ENCODE measurements at regions of chr21 and their contacts with region 1.

Region 1: GRCh38 chr21:37366482-37367316 is at the start of gene DYRK1A:
- DNase-seq: peak; percentile 99
- H3K4me3 ChIP-seq: peak within 1 kb of the TSS; percentile 89 to 94 (median 93)
- H3K27ac ChIP-seq: peak within 1 kb of the TSS; percentile 95
- H3K4me1 ChIP-seq: peaks cover 39% of the 10 kb centered on the region
- H3K27me3 ChIP-seq: no peaks in the 10 kb centered on the region
- CTCF ChIP-seq: peak in 1 of 2 donors; percentile 10
- POLR2A ChIP-seq: no peak
- total RNA-seq, gene DYRK1A: 51.8 TPM in 2 replicates

Region 2: GRCh38 chr21:37072988-37073416 is 293.7 kb before region 1 on chr21 and contains the starts of genes PIGP and TTC3:
- CTCF ChIA-PET with region 1: no interaction called
- POLR2A ChIA-PET with region 1: no interaction called
- dilution Hi-C with region 1: no loop called
- intact Hi-C with region 1: loop called (anchors 1 kb)
- DNase-seq: peak; percentile 97
- H3K4me3 ChIP-seq: peak within 1 kb of the TSS; percentile 49 to 88 (median 60)
- H3K27ac ChIP-seq: peak within 1 kb of the TSS; percentile 95
- H3K4me1 ChIP-seq: peaks cover 17% of the 10 kb centered on the region
- H3K27me3 ChIP-seq: no peaks in the 10 kb centered on the region
- CTCF ChIP-seq: no peak
- POLR2A ChIP-seq: peak; percentile 73
- total RNA-seq, gene PIGP: 11.4 and 12.5 TPM in 2 replicates
- total RNA-seq, gene TTC3: 104 and 113 TPM in 2 replicates

Region 3: GRCh38 chr21:37193006-37193405 is 173.7 kb before region 1 on chr21:
- CTCF ChIA-PET with region 1: no interaction called
- POLR2A ChIA-PET with region 1: no interaction called
- dilution Hi-C with region 1: no loop called
- intact Hi-C with region 1: no loop called
- DNase-seq: no peak
- H3K4me3 ChIP-seq: no peak overlapping the region
- H3K27ac ChIP-seq: no peak overlapping the region
- H3K4me1 ChIP-seq: no peaks in the 10 kb centered on the region
- H3K27me3 ChIP-seq: no peaks in the 10 kb centered on the region
- CTCF ChIP-seq: no peak
- POLR2A ChIP-seq: no peak

Region 4: GRCh38 chr21:37267269-37268184 is 99.2 kb before region 1 on chr21 and contains the start of gene VPS26C:
- CTCF ChIA-PET with region 1: interaction called, 3 read pairs
- POLR2A ChIA-PET with region 1: interaction called, 13 read pairs
- dilution Hi-C with region 1: no loop called
- intact Hi-C with region 1: loop called (anchors 1 kb)
- DNase-seq: peak; percentile 100
- H3K4me3 ChIP-seq: peak within 1 kb of the TSS; percentile 35 to 73 (median 72)
- H3K27ac ChIP-seq: peak within 1 kb of the TSS; percentile 87
- H3K4me1 ChIP-seq: peaks cover 12% of the 10 kb centered on the region
- H3K27me3 ChIP-seq: no peaks in the 10 kb centered on the region
- CTCF ChIP-seq: no peak
- POLR2A ChIP-seq: peak; percentile 17
- total RNA-seq, gene VPS26C: 53.7 and 57.3 TPM in 2 replicates

Region 5: DNA sequence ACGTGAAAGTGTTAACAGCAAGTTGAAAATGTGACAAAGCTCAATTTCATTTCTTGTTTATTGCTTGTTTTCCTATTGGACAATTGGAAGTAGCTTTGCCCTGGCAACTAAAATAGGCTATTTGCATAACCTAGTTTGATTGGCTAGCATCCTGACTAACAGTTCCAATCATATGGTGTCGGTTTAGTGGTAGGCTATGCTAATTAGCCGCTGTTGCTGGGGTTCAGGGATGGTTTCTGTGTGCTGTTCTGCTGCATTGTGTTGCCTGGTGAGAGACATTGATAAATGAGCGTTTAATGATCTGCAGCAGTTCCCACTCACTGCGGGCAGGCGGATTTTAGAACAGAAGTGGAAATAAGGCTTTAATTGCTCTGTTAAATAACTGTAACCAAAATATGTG is 68.4 kb after region 1 on chr21:
- CTCF ChIA-PET with region 1: no interaction called
- POLR2A ChIA-PET with region 1: no interaction called
- dilution Hi-C with region 1: no loop called
- intact Hi-C with region 1: loop called (anchors 5 kb)
- DNase-seq: peak; percentile 97
- H3K4me3 ChIP-seq: no peak overlapping the region
- H3K27ac ChIP-seq: no peak overlapping the region
- H3K4me1 ChIP-seq: peaks cover 4% of the 10 kb centered on the region
- H3K27me3 ChIP-seq: no peaks in the 10 kb centered on the region
- CTCF ChIP-seq: no peak
- POLR2A ChIP-seq: no peak

Region 6: GRCh38 chr21:37463083-37463801 is 96.5 kb after region 1 on chr21:
- CTCF ChIA-PET with region 1: interaction called, 3 read pairs
- POLR2A ChIA-PET with region 1: no interaction called
- dilution Hi-C with region 1: no loop called
- intact Hi-C with region 1: loop called (anchors 5 kb)
- DNase-seq: peak; percentile 71
- H3K4me3 ChIP-seq: peak overlapping the region in 1 of 3 experiments; percentile 14
- H3K27ac ChIP-seq: peak overlapping the region; percentile 2
- H3K4me1 ChIP-seq: peaks cover 10% of the 10 kb centered on the region
- H3K27me3 ChIP-seq: no peaks in the 10 kb centered on the region
- CTCF ChIP-seq: peak; percentile 44 to 61
- POLR2A ChIP-seq: no peak

Region 7: GRCh38 chr21:37546949-37547614 is 180.4 kb after region 1 on chr21:
- CTCF ChIA-PET with region 1: no interaction called
- POLR2A ChIA-PET with region 1: no interaction called
- dilution Hi-C with region 1: no loop called
- intact Hi-C with region 1: no loop called
- DNase-seq: peak; percentile 86
- H3K4me3 ChIP-seq: peak overlapping the region in 1 of 3 experiments; percentile 2
- H3K27ac ChIP-seq: peak overlapping the region; percentile 92
- H3K4me1 ChIP-seq: peaks cover 22% of the 10 kb centered on the region
- H3K27me3 ChIP-seq: no peaks in the 10 kb centered on the region
- CTCF ChIP-seq: no peak
- POLR2A ChIP-seq: peak; percentile 30

Region 8: DNA sequence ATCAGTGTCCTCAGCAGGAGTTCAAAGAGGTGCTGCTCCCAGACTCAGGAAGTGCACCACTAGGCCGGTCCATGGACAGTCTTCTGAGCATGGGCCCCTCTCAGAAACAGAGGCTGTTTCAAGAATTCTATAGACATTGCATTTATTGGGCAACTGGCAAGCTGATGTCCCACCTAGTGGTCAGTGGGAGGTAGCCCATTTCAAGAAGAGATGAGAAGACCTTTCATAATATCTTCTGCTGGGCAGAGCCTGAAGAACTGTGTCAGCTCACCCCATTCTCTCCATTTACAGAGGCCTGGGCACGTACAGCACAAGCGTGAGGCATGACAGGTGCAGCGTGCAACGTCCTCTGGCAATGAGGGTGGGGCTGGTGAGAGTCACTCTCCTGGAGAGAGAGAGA is 215.9 kb after region 1 on chr21:
- CTCF ChIA-PET with region 1: no interaction called
- POLR2A ChIA-PET with region 1: no interaction called
- dilution Hi-C with region 1: no loop called
- intact Hi-C with region 1: loop called (anchors 5 kb)
- DNase-seq: peak; percentile 69
- H3K4me3 ChIP-seq: no peak overlapping the region
- H3K27ac ChIP-seq: no peak overlapping the region
- H3K4me1 ChIP-seq: peaks cover 13% of the 10 kb centered on the region
- H3K27me3 ChIP-seq: no peaks in the 10 kb centered on the region
- CTCF ChIP-seq: peak; percentile 68 to 76
- POLR2A ChIP-seq: no peak